BJ (cell line): ENCODE measurements at regions of chr14 and their contacts with region 1.

Region 1: GRCh38 chr14:71753126-71753830 is 179.0 kb upstream of the RGS6 start:
- DNase-seq: no peak
- H3K4me3 ChIP-seq: no peak overlapping the region
- H3K27me3 ChIP-seq: no peaks in the 10 kb centered on the region
- CTCF ChIP-seq: peak; percentile 93

Region 2: DNA sequence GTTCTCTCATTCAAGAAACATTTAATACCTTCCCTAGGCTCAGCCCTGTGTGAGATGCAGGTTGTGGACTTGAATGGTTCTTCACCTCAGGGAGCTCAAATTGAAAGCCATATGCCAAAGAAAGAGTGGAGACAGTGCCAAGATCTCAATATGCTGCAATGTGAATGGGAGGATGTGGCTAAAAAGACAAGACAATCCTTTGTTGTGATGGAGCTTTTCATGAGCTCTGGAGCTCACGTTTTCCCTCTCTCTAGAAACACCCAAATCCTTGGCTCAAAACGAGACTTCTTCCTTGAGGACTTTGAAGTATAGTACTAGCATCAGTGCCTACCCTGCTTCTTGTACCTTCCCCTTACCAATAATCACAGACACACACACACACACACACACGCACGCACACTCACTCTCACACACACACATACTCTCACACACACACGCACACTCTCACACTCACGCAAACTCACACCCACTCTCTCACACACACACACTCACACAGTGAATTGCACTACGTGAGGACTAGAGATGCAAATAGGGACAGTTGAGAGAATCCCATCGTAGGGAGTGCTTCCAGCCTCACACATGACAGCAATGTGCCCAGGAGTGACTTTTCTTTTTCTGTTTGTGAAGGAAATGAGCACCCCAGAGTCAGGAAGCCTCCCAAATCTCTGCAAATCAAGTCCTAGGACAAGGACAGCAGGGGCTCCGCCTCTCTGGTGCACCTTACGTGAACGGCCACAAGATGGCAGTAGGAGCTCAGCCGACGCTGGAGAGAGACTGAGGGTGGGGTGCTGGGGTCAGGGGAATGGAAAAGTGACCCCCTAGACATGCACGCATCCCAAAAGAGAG is 614.6 kb before region 1 on chr14:
- CTCF ChIA-PET with region 1: interaction called, 96 read pairs
- POLR2A ChIA-PET with region 1: no interaction called
- DNase-seq: no peak
- H3K4me3 ChIP-seq: no peak overlapping the region
- H3K27me3 ChIP-seq: no peaks in the 10 kb centered on the region
- CTCF ChIP-seq: peak; percentile 96

Region 3: GRCh38 chr14:71720978-71721624 is 32.2 kb before region 1 on chr14:
- CTCF ChIA-PET with region 1: interaction called, 19 read pairs
- POLR2A ChIA-PET with region 1: no interaction called
- DNase-seq: no peak
- H3K4me3 ChIP-seq: no peak overlapping the region
- H3K27me3 ChIP-seq: no peaks in the 10 kb centered on the region
- CTCF ChIP-seq: peak; percentile 70

Region 4: DNA sequence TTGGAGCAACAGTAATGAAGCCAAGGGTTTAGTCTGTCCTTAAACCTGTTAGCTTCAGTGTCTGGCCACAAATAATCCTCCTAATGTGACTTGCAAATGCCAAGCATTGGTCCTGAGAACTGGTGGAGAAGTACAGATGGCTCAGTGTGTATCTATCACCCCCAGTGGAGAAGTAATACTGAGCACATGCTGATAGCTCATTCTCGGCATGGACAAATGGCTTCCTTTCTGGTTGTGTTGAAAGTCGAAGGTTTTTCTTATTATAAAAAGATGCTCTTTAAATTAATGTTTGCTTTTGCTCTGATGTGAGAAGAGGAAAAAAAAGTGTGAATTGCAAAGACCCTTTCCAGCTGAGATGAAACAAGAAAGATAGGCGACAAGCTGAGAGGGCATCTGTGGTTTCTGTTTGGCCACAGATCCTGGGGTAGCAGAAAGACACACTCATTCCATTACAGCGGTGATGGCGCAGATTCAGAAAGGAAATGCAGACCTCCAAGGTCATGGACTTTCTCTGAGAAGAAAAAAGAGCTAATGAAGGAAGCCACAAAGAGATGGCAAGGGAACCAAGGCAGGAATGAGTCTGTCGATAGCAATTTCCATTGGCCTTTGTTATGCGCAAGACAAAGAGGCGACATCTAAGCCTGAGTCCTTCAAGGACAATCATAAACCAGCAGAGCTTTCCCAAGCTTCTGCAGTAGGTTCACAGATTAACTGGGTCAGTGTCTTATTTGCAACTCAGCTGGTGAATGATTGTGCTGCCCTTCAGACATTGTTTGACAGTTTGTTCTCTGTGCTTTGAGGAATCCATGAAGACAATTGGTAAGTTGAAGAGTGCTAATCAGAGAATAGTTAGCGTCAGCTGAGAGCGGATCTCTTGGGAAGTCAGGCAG is 23.4 kb after region 1 on chr14:
- CTCF ChIA-PET with region 1: interaction called, 11 read pairs
- POLR2A ChIA-PET with region 1: no interaction called
- DNase-seq: no peak
- H3K4me3 ChIP-seq: no peak overlapping the region
- H3K27me3 ChIP-seq: no peaks in the 10 kb centered on the region
- CTCF ChIP-seq: no peak

Region 5: DNA sequence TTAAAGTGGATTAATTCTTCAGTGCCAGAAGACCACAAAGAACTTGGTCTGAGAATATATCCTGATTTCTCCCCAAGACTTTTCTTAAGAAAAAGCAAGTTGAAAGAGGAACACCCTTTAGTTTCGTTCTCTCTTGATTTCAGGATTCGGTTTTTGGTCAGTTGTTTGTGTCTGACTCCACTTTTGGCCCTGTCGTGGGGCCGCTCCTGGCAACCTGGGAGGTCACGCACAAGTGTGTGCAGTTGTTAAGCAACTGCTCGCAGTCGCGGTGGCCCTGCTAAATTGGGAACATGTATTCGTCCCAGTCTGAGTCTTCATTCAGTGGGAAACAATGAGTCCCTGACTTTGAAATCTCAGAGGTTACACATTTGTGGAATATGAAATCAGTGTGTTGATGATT is 247.6 kb after region 1 on chr14:
- CTCF ChIA-PET with region 1: no interaction called
- POLR2A ChIA-PET with region 1: no interaction called
- DNase-seq: no peak
- H3K4me3 ChIP-seq: no peak overlapping the region
- H3K27me3 ChIP-seq: no peaks in the 10 kb centered on the region; the same call in 1 of the 2 replicates
- CTCF ChIP-seq: no peak